Activated CD4-positive, alpha-beta T cell treated with anti-CD3 and anti-CD28 coated beads for 36 hours (primary cell): ENCODE measurements at regions of chr11 and their contacts with region 1.

Region 1: DNA sequence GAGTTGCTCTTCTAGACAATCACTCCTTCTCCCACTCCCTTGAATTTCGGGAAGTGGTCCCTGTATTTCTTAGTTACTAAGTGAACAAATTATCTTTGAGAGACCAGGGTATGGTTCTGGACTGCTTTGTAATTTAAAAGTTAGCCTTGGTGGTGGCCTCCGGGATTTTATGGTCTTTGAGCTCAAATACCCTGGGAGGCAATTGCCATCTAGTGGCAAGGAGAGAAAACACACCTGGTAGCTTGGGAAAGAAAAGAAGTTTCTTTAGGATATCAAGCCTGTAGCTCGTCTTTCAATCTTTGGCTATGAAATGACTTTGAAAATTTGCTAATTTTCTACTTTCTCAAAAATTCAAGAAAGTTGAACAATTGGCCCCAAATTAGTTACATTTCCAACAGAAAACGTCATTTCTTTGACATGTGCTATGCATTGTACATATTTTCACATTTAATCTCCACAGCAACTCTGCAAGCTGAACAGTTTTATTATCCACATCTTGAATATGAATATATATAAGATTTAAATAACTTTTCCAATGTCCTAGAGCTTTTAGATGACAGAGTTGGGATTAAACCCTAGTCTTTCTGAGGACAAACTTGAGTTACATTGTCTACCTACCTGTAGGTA is 39.1 kb downstream of the MMP27 start:
- DNase-seq: peak; percentile 37
- ATAC-seq: peak; percentile 64
- H3K4me3 Mint-ChIP-seq: no peak overlapping the region
- H3K27ac Mint-ChIP-seq: no peak overlapping the region
- H3K4me1 Mint-ChIP-seq: no peaks in the 10 kb centered on the region
- H3K27me3 Mint-ChIP-seq: peaks cover 2% of the 10 kb centered on the region

Region 2: DNA sequence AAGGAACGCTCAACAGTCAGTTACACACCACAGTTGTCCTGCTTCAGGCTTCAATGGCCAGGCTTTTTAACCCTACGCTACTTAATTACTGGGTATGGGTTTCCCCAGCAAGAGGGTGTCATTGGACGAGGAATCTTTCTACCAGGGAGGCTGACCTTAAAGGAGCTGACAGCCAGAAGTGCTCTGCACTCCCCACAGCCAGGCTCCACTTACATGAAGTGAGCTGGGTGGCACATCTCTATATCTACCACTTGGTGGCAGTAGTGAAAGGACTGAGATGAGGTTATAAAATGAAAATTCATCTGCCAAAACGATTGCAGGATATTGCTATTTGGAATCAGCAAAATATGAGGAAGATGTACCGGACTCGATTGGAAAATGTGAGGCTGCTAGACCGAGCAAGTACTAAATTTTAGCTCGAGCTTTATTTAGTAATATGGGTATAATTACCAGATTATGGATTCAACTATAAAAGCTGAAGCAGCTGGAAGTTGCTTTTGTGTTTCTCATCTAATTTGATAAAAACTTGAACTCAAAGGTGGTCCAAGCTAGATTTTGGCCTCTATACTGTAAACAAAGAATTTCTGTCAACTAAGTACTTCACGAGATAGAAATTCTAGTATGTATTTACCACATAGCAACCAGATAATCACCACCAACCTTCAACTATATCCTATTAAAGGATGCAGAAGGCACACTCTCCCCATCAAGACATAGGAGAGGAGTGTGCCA is 805.6 kb before region 1 on chr11:
- CTCF ChIA-PET with region 1: no interaction called
- POLR2A ChIA-PET with region 1: no interaction called
- intact Hi-C with region 1: loop called in 1 of 2 experiments (anchors 1 kb)
- DNase-seq: peak; percentile 32
- ATAC-seq: peak; percentile 79
- H3K4me3 Mint-ChIP-seq: no peak overlapping the region
- H3K27ac Mint-ChIP-seq: no peak overlapping the region
- H3K4me1 Mint-ChIP-seq: no peaks in the 10 kb centered on the region
- H3K27me3 Mint-ChIP-seq: peaks cover 11% of the 10 kb centered on the region

Region 3: DNA sequence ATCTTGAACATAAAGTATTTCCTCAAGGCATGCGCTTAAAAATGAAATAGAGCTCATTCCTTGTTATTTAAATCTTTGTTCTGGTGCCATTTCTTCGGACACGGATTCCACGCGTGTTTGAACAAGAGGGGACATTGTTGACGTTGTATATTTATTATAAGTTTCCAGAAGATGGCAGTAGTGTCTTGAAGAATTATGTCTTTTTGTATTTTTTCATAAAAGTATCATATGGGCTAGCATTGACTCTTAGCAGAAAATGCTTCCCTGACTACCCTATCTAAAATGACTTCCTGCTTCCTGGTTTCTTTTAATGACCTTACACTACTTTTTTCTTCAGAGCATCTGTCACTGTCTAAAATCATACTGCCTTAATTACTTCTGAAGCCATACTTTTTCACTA is 299.1 kb before region 1 on chr11:
- CTCF ChIA-PET with region 1: interaction called, 12 read pairs
- POLR2A ChIA-PET with region 1: no interaction called
- intact Hi-C with region 1: no loop called
- DNase-seq: no peak
- ATAC-seq: peak; percentile 50
- H3K4me3 Mint-ChIP-seq: no peak overlapping the region
- H3K27ac Mint-ChIP-seq: no peak overlapping the region
- H3K4me1 Mint-ChIP-seq: peaks cover 27% of the 10 kb centered on the region
- H3K27me3 Mint-ChIP-seq: no peaks in the 10 kb centered on the region